ENCODE measurements at regions of chr2 and their contacts with region 1.

Region 1: GRCh38 chr2:64144057-64145013 is at the start of gene PELI1:
- DNase-seq: peak; percentile 98
- H3K4me3 ChIP-seq: peak within 1 kb of the TSS; percentile 92
- H3K27ac ChIP-seq: peak within 1 kb of the TSS; percentile 90
- H3K4me1 ChIP-seq: peaks cover 32% of the 10 kb centered on the region
- H3K27me3 ChIP-seq: no peaks in the 10 kb centered on the region
- CTCF ChIP-seq: peak; percentile 46
- total RNA-seq, gene PELI1: 35.1 and 36.9 TPM in 2 replicates

Region 2: DNA sequence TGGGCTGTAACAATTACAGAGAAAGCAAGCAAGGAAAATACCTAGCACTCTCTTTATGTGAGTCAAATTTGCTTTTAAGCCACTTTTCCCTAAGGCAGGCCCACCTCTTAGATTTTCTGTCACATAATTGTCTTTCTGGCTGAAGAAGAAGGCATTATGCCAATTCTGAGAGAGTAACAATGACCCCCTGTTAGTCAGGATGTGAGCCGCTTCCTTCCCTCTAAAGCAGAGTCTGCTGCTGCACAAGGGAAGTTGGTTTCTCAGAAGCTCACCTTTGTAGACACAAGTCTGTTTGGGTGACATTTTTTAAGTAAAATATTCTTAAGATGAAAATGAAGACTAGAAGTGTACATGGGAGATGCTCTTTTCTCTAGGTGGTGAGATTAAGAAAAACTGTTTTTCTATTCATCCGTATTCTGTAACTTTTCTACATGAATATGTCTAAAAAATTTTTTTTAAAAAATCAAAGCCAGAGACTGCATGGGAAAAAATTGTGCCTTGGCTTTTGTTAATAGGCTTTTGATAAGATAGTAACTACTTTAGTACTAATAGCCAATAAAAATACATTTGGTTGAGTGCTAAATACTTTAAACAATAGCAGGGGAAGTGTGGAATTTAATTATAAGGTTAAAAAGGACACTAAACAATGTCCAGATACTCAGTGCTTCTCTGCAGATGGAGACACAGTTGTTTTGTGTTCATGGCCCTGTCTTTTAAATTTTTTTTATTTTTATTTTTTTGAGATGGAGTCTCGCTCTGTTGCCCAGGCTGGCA is 91.7 kb before region 1 on chr2:
- CTCF ChIA-PET with region 1: no interaction called
- POLR2A ChIA-PET with region 1: no interaction called
- intact Hi-C with region 1: loop called (anchors 2 kb)
- DNase-seq: peak; percentile 88
- H3K4me3 ChIP-seq: no peak overlapping the region
- H3K27ac ChIP-seq: no peak overlapping the region
- H3K4me1 ChIP-seq: peaks cover 4% of the 10 kb centered on the region
- H3K27me3 ChIP-seq: no peaks in the 10 kb centered on the region
- CTCF ChIP-seq: no peak

Region 3: GRCh38 chr2:64228126-64228678 is 83.9 kb after region 1 on chr2:
- CTCF ChIA-PET with region 1: no interaction called
- POLR2A ChIA-PET with region 1: no interaction called
- intact Hi-C with region 1: loop called (anchors 2 kb)
- DNase-seq: peak; percentile 95
- H3K4me3 ChIP-seq: peak overlapping the region; percentile 32
- H3K27ac ChIP-seq: peak overlapping the region; percentile 51
- H3K4me1 ChIP-seq: peaks cover 9% of the 10 kb centered on the region
- H3K27me3 ChIP-seq: no peaks in the 10 kb centered on the region
- CTCF ChIP-seq: no peak

Region 4: GRCh38 chr2:64250751-64251403 is 106.5 kb after region 1 on chr2:
- CTCF ChIA-PET with region 1: no interaction called
- POLR2A ChIA-PET with region 1: no interaction called
- intact Hi-C with region 1: no loop called
- DNase-seq: no peak
- H3K4me3 ChIP-seq: no peak overlapping the region
- H3K27ac ChIP-seq: no peak overlapping the region
- H3K4me1 ChIP-seq: no peaks in the 10 kb centered on the region
- H3K27me3 ChIP-seq: no peaks in the 10 kb centered on the region
- CTCF ChIP-seq: no peak

Region 5: DNA sequence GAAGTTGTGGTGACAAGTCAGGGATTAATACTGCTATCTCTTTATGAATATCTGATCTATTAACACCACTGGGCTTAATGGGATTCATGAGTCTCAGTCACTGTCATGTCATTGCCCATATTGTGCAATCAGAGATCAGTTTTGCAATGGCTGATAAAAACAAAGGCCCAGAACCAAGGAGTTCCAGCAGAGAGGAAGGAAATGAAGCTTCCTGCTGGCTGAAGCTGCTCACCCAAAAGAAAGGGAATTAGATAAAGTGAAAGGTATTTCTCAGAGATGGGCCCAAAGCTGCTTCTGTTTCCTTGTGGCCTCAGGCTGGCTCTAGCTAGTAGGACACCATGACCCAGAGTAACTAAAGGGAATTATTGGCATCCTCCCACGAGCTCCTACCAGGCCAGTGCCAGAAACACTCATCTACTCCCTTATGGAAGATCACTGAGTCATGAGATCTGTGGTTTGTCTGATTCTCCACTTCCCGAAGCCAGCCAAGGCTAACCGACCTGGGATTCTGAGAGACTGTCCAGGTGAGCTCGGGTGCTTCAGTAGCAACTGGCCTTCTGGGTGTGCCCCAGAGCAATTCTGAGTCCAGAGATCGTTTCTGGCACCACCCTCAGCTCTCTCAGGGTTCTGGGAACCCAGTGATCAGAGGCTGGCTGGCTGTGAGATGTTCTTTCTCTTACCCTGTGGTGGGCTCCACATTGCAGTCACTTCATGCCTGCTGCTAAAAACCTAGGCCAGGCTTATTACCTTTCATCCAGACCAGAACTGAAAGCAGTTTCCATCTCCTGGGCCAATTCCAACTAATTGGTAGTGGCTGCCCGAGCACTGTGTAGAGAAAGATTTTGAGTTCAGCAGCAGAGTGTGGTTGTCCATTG is 129.4 kb after region 1 on chr2:
- CTCF ChIA-PET with region 1: no interaction called
- POLR2A ChIA-PET with region 1: no interaction called
- intact Hi-C with region 1: loop called (anchors 5 kb)
- DNase-seq: peak; percentile 97
- H3K4me3 ChIP-seq: peak overlapping the region; percentile 8
- H3K27ac ChIP-seq: peak overlapping the region; percentile 89
- H3K4me1 ChIP-seq: peaks cover 45% of the 10 kb centered on the region
- H3K27me3 ChIP-seq: no peaks in the 10 kb centered on the region
- CTCF ChIP-seq: no peak

Region 6: GRCh38 chr2:64311948-64312621 is 167.8 kb after region 1 on chr2:
- CTCF ChIA-PET with region 1: interaction called, 3 read pairs
- POLR2A ChIA-PET with region 1: no interaction called
- intact Hi-C with region 1: loop called (anchors 2 kb)
- DNase-seq: peak; percentile 96
- H3K4me3 ChIP-seq: peak overlapping the region; percentile 9
- H3K27ac ChIP-seq: peak overlapping the region; percentile 81
- H3K4me1 ChIP-seq: peaks cover 30% of the 10 kb centered on the region
- H3K27me3 ChIP-seq: no peaks in the 10 kb centered on the region
- CTCF ChIP-seq: peak; percentile 72

Region 7: DNA sequence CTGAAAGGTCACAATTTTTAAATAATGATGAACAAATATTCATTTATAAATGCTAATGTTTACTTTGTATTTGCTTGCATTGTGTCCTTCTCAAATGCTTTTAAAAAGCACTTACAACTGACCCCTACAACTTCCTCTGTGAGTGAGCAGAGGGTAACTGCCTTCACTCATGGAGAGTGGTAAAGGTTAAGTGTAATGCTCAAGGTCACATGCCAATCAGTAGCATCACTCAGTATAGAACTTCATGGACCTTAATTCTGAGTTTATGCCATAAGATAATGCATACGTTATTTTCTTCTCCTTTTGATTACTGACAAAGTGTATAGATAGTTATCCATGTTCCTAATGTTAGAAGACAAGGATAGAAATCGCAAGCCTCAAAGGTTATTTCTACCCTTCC is 601.2 kb after region 1 on chr2:
- CTCF ChIA-PET with region 1: no interaction called
- POLR2A ChIA-PET with region 1: no interaction called
- intact Hi-C with region 1: no loop called
- DNase-seq: no peak
- H3K4me3 ChIP-seq: no peak overlapping the region
- H3K27ac ChIP-seq: no peak overlapping the region
- H3K4me1 ChIP-seq: peaks cover 16% of the 10 kb centered on the region
- H3K27me3 ChIP-seq: no peaks in the 10 kb centered on the region
- CTCF ChIP-seq: no peak

Region 8: DNA sequence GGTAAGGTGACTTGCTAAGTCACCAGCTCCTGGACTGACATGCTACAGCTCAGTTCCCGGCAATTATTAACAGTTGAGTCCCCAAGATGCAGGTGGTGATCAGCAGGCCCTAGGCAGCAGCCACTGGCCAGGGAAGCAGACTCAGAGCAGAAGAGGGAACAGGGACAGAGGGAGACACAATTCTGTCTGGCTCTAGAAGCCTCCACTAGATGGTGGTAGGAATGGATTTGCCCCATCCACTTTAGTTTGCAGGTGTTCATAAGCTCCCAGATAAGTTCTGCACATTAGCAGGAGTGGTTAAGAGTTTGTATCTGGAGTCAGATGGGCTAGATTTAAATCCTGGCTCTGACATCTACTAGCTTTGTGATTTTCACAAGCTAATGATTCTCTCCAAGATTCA is 819.4 kb after region 1 on chr2:
- CTCF ChIA-PET with region 1: no interaction called
- POLR2A ChIA-PET with region 1: no interaction called
- intact Hi-C with region 1: no loop called
- DNase-seq: no peak
- H3K4me3 ChIP-seq: no peak overlapping the region
- H3K27ac ChIP-seq: no peak overlapping the region
- H3K4me1 ChIP-seq: no peaks in the 10 kb centered on the region
- H3K27me3 ChIP-seq: no peaks in the 10 kb centered on the region
- CTCF ChIP-seq: no peak

Measured in A673 (cell line).